ENCODE measurements at regions of chr2 and their contacts with region 1.

Region 1: DNA sequence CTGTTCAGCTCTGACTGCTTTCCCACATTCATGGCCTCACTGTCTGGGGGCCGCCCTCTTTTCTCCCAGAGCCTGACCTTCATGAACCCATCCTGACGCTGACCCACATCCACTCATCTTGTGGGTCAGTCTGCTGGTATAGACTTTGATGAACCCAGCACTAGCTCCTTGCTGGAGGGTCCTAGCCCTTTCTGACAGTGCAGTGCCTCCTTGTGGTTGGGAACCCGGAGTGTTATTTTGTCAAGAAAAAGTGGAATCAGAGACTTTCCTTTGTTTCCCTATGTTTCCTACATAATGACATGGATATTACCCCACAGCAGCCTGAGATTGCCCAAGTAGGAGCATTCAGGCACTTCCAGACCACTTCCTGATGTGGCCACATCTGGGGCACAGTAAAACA is 19.3 kb upstream of the OSR1 start:
- ATAC-seq: no peak
- H3K4me3 ChIP-seq: no peak overlapping the region
- H3K27ac ChIP-seq: no peak overlapping the region
- H3K4me1 ChIP-seq: no peaks in the 10 kb centered on the region

Region 2: DNA sequence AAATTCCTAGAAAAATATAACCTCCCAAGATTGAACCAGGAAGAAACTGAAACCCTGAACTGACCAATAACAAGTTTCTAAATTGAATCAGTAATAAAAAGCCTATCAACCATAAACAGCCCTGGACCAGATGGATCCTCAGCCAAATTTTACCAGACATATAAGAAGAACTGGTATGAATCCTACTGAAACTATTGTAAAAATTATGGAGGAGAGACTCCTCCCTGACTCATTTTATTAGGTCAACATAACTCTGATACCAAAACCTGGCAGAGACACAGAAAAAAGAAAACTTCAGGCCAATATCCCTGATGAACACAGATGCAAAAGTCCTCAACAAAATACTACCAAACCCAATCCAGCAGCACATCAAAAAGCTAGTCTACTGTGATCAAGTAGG is 799.7 kb before region 1 on chr2:
- in situ Hi-C with region 1: no loop called
- ATAC-seq: no peak
- H3K4me3 ChIP-seq: no peak overlapping the region
- H3K27ac ChIP-seq: no peak overlapping the region
- H3K4me1 ChIP-seq: no peaks in the 10 kb centered on the region

Region 3: DNA sequence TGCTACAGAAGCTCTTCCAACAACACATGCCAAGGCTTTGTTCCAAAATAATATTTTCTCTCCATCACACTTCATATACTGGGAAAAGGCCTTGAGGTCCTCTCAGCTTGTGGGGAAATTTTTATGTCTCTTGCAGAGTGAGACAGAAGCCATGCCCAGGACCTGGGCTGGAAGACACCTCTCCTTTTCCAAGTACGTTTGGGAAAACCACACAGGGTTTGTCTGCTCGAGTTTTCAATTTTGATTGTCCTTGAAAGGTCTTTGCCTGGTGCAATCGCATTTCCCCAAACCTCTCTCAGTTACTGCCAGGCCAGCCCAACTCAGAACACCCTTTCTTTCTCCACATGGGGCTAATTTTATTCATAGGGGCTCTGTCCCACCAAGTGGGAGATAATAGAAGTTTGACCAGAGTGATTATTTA is 291.5 kb before region 1 on chr2:
- in situ Hi-C with region 1: no loop called
- ATAC-seq: no peak
- H3K4me3 ChIP-seq: no peak overlapping the region
- H3K27ac ChIP-seq: no peak overlapping the region
- H3K4me1 ChIP-seq: peaks cover 0 to 6% of the 10 kb centered on the region in 2 donors

Region 4: DNA sequence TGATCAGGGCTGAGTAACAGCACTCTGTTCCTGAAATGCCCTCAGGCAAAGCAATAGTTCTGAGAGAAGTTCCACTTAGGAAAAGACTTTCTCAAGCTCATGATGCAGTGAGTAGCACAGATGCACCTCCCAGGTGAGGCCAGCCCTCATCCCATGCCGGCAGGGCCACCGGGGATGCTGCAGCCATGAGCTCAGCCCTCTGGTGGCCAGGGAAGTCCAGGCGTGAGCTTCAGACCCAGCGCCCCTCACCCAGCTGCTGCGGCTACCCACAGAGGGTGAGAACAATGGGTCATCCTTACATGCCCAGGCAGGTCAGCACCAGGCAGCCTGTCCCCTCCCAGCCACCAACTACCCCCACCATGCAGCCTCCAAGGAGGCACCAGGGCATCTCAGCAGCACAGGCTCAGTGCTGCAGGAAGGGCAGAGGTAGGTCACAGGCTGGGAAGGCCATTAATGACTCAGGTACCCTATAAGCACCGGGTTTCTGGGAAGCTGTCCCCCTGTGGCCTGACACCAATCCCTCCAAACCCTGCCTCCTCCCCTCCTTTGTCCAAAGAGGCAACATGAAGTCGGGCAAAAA is 473.5 kb after region 1 on chr2:
- in situ Hi-C with region 1: loop called in 4 of 9 experiments (anchors 10 to 25 kb)
- ATAC-seq: no peak
- H3K4me3 ChIP-seq: no peak overlapping the region
- H3K27ac ChIP-seq: no peak overlapping the region
- H3K4me1 ChIP-seq: no peaks in the 10 kb centered on the region